Caco-2 (cell line): ENCODE measurements at regions of chr1 and their contacts with region 1.

Region 1: DNA sequence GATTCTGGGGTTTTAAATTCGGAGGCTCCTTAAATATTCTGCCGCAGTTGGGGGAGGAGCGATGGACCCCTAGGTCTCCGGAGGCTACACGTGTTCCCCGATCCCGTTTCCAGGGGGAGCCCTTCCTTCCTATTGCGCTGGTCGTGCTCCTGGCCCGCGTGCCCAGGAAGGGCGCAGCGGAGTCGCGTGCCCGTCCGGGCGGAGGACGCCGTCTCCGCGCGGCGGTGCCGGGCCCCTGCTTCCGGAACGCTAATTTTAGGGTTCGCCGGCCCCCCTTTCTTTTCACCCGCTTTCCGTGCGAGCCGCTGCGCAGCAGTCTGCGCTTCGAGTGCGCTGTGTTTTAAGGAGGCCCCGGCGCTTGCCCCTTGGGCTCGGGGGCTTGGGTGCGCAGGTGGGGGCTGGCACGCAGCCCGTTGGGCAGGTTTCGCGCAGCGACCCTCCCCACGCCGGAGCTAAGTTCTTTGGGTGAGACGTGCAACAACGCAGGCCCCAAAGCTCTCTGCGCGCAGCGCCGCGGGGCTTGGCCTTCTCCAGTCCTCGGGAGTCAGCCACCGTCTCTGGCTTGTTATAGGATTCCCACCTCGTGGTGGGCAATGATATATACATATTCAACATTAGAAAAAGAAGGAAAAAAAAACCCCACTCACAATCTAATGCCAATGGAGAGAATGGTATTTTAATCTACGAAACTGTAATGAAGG is 43.5 kb upstream of the DNAJC6 start:
- DNase-seq: peak; percentile 58 to 64
- H3K4me3 ChIP-seq: peak overlapping the region; percentile 34
- H3K4me3 Mint-ChIP-seq: peak overlapping the region; percentile 64
- H3K27ac Mint-ChIP-seq: no peak overlapping the region
- H3K4me1 ChIP-seq: no peaks in the 10 kb centered on the region
- H3K4me1 Mint-ChIP-seq: no peaks in the 10 kb centered on the region
- H3K27me3 ChIP-seq: no peaks in the 10 kb centered on the region
- H3K27me3 Mint-ChIP-seq: no peaks in the 10 kb centered on the region
- CTCF ChIP-seq: peak; percentile 34 to 38

Region 2: GRCh38 chr1:65309304-65310077 is 43.7 kb after region 1 on chr1 and contains the start of gene DNAJC6:
- CTCF ChIA-PET with region 1: no interaction called
- POLR2A ChIA-PET with region 1: no interaction called
- intact Hi-C with region 1: loop called (anchors 5 kb)
- DNase-seq: peak; percentile 57 to 85
- H3K4me3 ChIP-seq: peak within 1 kb of the TSS; percentile 41
- H3K4me3 Mint-ChIP-seq: peak within 1 kb of the TSS; percentile 71
- H3K27ac Mint-ChIP-seq: no peak within 1 kb of the TSS
- H3K4me1 ChIP-seq: no peaks in the 10 kb centered on the region; the same call in 1 of the 2 replicates
- H3K4me1 Mint-ChIP-seq: peaks cover 5% of the 10 kb centered on the region
- H3K27me3 ChIP-seq: no peaks in the 10 kb centered on the region
- H3K27me3 Mint-ChIP-seq: no peaks in the 10 kb centered on the region
- CTCF ChIP-seq: no peak
- total RNA-seq, gene DNAJC6: 4.0 and 6.2 TPM in 2 replicates